Heart left ventricle (tissue), 16 donors: ENCODE measurements at regions of chr20 and their contacts with region 1.

Region 1: GRCh38 chr20:9068851-9069663 is at the start of gene PLCB4:
- DNase-seq: peak; percentile 58 to 75 (median 64)
- ATAC-seq: peak in 3 of 4 donors; percentile 38 to 55 (median 41)
- H3K4me3 ChIP-seq: peak within 1 kb of the TSS; percentile 68 to 95 (median 90)
- H3K27ac ChIP-seq: peak within 1 kb of the TSS; percentile 68 to 98 (median 94)
- H3K4me1 ChIP-seq: peaks cover 0 to 50% (median 34%) of the 10 kb centered on the region in 12 donors
- H3K27me3 ChIP-seq: peaks cover 0 to 22% (median 0%) of the 10 kb centered on the region in 9 donors
- CTCF ChIP-seq: no peak
- POLR2A ChIP-seq: peak in 1 of 2 donors; percentile 38
- total RNA-seq, gene PLCB4: 14.7 to 31.8 (median 18.6) TPM

Region 2: GRCh38 chr20:8700756-8701155 is 368.3 kb before region 1 on chr20:
- intact Hi-C with region 1: no loop called
- DNase-seq: no peak
- ATAC-seq: no peak
- H3K4me3 ChIP-seq: no peak overlapping the region
- H3K27ac ChIP-seq: no peak overlapping the region
- H3K4me1 ChIP-seq: no peaks in the 10 kb centered on the region
- H3K27me3 ChIP-seq: no peaks in the 10 kb centered on the region
- CTCF ChIP-seq: no peak
- POLR2A ChIP-seq: no peak

Region 3: GRCh38 chr20:8901237-8902025 is 167.6 kb before region 1 on chr20:
- intact Hi-C with region 1: loop called in 1 of 10 experiments (anchors 2 kb)
- DNase-seq: peak; percentile 63 to 83 (median 76)
- ATAC-seq: peak; percentile 87 to 97 (median 95)
- H3K4me3 ChIP-seq: no peak overlapping the region
- H3K27ac ChIP-seq: peak overlapping the region; percentile 23 to 88 (median 62)
- H3K4me1 ChIP-seq: peaks cover 0 to 24% (median 13%) of the 10 kb centered on the region in 12 donors
- H3K27me3 ChIP-seq: no peaks in the 10 kb centered on the region
- CTCF ChIP-seq: no peak
- POLR2A ChIP-seq: no peak

Region 4: DNA sequence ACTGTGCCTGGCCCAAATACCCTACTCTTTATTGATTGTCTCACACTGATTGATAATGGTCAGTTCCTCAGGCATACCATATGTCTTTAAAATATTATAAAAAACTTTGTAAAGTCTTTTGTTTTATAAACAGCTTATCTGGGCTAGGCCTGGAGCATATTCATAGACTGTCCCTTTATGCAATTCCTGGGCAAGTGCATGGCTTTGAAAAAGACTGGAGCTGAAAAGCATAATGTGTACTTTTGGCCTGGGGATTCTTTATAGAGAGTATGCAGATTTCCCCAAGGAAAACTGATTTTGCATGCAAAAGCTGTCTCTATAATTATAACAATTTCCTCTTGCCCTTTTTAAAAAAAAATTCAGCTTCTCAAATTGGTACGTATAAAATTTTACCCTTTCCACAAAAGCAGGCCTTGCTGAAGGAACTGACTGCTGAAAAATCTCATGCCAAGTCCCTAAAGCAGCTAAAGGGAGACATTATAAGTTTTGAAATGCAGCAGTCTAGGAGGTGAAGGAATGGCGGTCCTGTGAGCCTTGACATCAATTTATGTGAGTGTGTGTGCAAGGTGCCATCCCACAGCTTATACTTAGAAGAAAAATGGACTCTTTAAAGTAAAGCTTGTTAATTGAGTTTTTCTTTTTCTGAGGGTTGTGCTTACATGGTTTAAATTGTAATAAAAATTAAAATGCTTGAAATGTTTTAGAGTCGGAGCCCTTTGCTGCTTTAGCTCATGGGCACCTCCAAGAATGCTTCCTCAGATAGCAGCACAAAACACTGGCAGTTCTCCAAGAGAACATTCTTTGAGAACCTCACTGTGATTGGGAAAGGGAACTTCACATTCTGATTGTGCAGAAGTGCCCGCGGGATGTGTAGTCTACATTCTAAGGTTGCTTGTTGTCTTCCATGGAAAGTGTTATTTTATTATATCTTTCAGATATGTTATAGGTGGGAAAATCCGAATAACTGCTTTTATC is 43.8 kb after region 1 on chr20:
- intact Hi-C with region 1: loop called in 2 of 10 experiments (anchors 5 kb)
- DNase-seq: peak in 4 of 5 donors; percentile 43 to 49 (median 48)
- ATAC-seq: peak; percentile 88 to 93 (median 90)
- H3K4me3 ChIP-seq: no peak overlapping the region
- H3K27ac ChIP-seq: peak overlapping the region; percentile 25 to 74 (median 51)
- H3K4me1 ChIP-seq: peaks cover 0 to 63% (median 43%) of the 10 kb centered on the region in 12 donors
- H3K27me3 ChIP-seq: no peaks in the 10 kb centered on the region
- CTCF ChIP-seq: no peak
- POLR2A ChIP-seq: no peak

Region 5: GRCh38 chr20:9166153-9166780 is 97.2 kb after region 1 on chr20:
- intact Hi-C with region 1: loop called in 4 of 10 experiments (anchors 5 to 10 kb)
- DNase-seq: no peak
- ATAC-seq: peak; percentile 38 to 79 (median 61)
- H3K4me3 ChIP-seq: peak overlapping the region in 9 of 12 donors; percentile 3 to 52 (median 33)
- H3K27ac ChIP-seq: peak overlapping the region in 8 of 12 donors; percentile 23 to 75 (median 66)
- H3K4me1 ChIP-seq: peaks cover 0 to 33% (median 11%) of the 10 kb centered on the region in 12 donors
- H3K27me3 ChIP-seq: no peaks in the 10 kb centered on the region
- CTCF ChIP-seq: no peak
- POLR2A ChIP-seq: no peak

Region 6: GRCh38 chr20:9353180-9353915 is 284.3 kb after region 1 on chr20:
- intact Hi-C with region 1: loop called in 8 of 10 experiments (anchors 5 to 10 kb)
- DNase-seq: no peak
- ATAC-seq: peak in 3 of 4 donors; percentile 57 to 63 (median 62)
- H3K4me3 ChIP-seq: no peak overlapping the region
- H3K27ac ChIP-seq: peak overlapping the region in 4 of 12 donors; percentile 4 to 10 (median 9)
- H3K4me1 ChIP-seq: peaks cover 0 to 35% (median 19%) of the 10 kb centered on the region in 12 donors
- H3K27me3 ChIP-seq: no peaks in the 10 kb centered on the region
- CTCF ChIP-seq: peak in 9 of 12 donors; percentile 10 to 38 (median 18)
- POLR2A ChIP-seq: no peak